Activated B cell treated with CpG ODN at 0.5 μM for 24 hours (primary cell): ENCODE measurements at regions of chr6 and their contacts with region 1.

Region 1: DNA sequence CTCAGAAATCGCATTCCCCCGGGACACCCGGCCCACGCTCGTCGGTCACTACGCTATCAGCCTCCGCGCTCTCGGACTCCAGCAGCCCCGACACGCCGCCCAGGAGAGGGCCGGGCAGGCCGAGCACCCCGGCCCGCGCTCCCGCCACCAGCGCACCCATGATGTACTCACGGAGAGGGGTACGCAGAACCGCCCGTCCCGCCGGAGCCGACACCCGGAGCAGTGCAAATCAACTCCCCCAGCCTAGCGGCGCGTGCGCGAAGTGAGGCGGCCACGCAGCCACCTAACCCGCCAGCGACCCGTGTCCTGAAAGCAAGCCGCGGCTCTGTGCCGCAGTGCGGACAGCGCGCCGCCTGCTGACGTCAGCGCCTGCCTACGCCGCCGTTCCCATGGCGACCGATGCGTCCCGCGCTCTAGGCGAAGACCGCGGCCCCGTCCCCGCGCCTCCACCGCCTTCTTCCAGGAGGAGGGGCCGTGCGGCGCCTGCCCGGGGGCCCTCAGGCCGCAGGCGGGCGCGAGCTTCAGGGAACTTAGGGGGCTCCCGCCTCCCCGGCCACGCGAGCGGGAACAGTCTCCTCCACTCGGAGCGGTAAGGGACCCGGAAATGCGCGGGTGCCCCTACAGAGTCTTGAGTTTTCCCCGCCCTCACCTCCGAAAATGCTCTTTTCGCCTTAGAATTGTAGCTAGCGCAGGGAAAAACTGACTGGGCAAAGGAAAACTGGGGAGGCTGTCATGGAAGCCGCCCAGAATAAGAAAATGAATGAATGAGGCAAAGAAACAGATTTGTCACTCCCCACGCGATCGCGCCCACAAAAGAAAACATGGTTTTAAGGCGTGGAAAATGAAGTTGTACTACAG is at the start of gene AHI1:
- DNase-seq: peak; percentile 95
- ATAC-seq: peak; percentile 91
- H3K4me3 Mint-ChIP-seq: no peak within 1 kb of the TSS
- H3K27ac Mint-ChIP-seq: no peak within 1 kb of the TSS
- H3K4me1 Mint-ChIP-seq: peaks cover 8% of the 10 kb centered on the region
- H3K27me3 Mint-ChIP-seq: no peaks in the 10 kb centered on the region
- CTCF ChIP-seq: no peak
- total RNA-seq, gene AHI1: 18.2 and 21.0 TPM in 2 replicates

Region 2: DNA sequence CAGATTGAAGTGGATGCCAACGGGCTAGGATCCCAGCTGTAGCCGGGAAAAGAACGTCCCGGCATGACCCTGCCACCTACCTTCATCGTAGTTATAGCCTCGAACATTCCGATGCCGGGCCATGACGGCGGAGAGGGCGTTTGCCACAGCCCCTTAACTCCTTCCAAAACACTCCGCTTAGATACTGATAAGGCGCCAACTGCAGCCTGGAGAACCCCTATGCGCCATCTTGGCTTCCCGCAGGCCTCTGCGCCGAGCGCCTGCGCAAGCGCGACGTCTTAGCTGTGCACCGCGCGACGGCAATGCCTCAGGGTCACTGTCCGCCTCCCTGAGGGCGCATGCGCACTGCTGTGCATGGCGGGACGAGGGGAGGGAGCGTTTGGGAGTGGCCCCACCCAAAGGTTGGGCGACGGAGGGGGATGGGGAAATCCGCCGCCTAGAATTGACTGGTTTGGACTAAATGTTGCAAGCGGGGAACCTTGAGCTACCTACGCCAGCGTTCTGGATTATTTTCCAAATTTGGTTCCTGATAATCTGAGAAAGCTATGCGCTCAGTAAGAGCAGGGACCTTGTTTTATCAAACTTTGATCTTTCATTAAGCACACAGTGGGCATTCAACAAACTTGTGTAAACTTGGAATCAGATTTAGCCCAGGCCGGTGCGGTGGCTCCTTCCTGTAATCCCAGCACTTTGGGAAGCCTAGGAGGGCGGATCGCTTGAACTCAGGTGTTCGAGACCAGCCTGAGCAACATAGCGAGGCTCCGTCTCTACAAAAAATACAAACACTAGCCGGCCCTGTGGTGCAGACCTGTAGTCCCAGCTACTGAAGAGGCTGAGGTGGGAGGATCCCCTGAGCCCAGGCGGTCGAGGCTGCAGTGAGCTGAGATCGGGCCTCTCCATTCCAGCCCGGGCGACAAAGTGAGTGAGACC is 442.8 kb before region 1 on chr6 and contains the start of gene HBS1L:
- CTCF ChIA-PET with region 1: no interaction called
- POLR2A ChIA-PET with region 1: interaction called, 7 read pairs
- intact Hi-C with region 1: loop called (anchors 1 kb)
- DNase-seq: peak; percentile 94
- ATAC-seq: peak; percentile 98
- H3K4me3 Mint-ChIP-seq: peak within 1 kb of the TSS; percentile 98
- H3K27ac Mint-ChIP-seq: peak within 1 kb of the TSS; percentile 97
- H3K4me1 Mint-ChIP-seq: peaks cover 35% of the 10 kb centered on the region
- H3K27me3 Mint-ChIP-seq: no peaks in the 10 kb centered on the region
- CTCF ChIP-seq: no peak
- total RNA-seq, gene HBS1L: 60.2 and 67.5 TPM in 2 replicates

Region 3: DNA sequence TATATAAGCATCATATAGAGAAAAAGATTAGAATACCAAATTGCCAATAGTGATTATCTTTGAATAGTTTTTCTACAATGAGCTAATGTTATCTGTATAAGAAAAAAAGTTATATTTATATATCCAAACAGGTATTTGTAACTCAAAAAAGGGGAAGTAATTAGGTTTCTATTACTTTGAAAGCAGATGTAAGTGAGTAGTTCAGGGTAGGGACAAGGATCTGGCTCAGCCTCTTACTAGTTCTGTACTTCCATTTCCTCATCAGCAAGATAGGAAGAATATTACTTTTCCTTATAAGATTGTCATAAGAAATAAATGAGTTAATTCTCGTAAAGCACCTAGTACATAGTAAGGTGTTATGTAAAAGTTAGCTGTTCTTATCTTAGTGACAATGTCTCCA is 32.3 kb before region 1 on chr6:
- CTCF ChIA-PET with region 1: no interaction called
- POLR2A ChIA-PET with region 1: no interaction called
- intact Hi-C with region 1: loop called (anchors 2 kb)
- DNase-seq: no peak
- ATAC-seq: peak; percentile 66
- H3K4me3 Mint-ChIP-seq: no peak overlapping the region
- H3K27ac Mint-ChIP-seq: no peak overlapping the region
- H3K4me1 Mint-ChIP-seq: peaks cover 13% of the 10 kb centered on the region
- H3K27me3 Mint-ChIP-seq: no peaks in the 10 kb centered on the region
- CTCF ChIP-seq: no peak

Region 4: DNA sequence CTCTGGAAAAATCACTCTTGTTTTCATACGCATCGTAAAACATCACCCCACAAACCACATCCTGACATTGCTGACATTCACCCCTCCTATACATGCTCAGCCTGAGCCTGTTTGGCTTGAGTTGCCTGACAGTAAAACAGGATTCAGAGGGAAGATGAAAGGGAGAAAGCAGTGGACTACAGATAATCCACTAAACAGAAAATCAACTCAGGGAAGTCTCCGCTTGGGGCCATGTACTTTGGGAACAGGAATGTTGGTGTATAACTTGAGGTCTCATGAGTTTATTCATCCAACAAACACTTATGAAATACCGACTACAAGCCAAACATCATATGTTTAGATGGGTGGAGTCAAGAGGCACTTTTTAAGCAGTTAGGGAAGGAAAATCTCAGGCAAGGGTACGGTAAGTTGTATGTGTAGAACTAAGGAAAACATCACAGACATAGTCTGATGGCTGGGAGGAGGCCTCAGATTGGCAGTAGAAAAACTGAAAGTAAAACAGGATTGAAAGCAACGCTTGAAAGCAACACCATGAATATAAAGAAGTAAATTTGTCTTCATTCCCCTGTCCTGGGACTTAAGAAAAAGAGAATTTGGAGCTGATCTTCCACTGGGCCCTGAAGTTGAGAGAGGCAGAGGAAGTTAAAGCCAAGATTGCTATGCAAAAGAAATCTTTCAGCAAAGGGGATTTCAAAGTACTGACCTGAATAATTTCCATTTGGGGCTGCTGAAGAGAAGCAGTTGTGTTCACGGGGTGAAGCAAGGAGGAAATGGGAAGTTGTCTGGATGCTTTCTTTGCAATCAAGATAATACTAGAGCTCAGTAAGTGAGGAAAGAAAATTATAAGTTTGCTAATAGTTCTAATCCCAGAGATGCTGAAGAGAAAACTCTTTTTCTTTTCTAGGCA is 382.7 kb after region 1 on chr6:
- CTCF ChIA-PET with region 1: no interaction called
- POLR2A ChIA-PET with region 1: no interaction called
- intact Hi-C with region 1: loop called (anchors 1 kb)
- DNase-seq: no peak
- ATAC-seq: peak; percentile 84
- H3K4me3 Mint-ChIP-seq: peak overlapping the region; percentile 80
- H3K27ac Mint-ChIP-seq: peak overlapping the region; percentile 98
- H3K4me1 Mint-ChIP-seq: peaks cover 46% of the 10 kb centered on the region
- H3K27me3 Mint-ChIP-seq: no peaks in the 10 kb centered on the region
- CTCF ChIP-seq: no peak

Region 5: GRCh38 chr6:136728976-136729515 is 1231.4 kb after region 1 on chr6:
- CTCF ChIA-PET with region 1: no interaction called
- POLR2A ChIA-PET with region 1: interaction called, 14 read pairs
- intact Hi-C with region 1: no loop called
- DNase-seq: no peak
- ATAC-seq: no peak
- H3K4me3 Mint-ChIP-seq: no peak overlapping the region
- H3K27ac Mint-ChIP-seq: no peak overlapping the region
- H3K4me1 Mint-ChIP-seq: peaks cover 52% of the 10 kb centered on the region
- H3K27me3 Mint-ChIP-seq: no peaks in the 10 kb centered on the region
- CTCF ChIP-seq: no peak